WTC11 (cell line): ENCODE measurements at regions of chr20 and their contacts with region 1.

Region 1: DNA sequence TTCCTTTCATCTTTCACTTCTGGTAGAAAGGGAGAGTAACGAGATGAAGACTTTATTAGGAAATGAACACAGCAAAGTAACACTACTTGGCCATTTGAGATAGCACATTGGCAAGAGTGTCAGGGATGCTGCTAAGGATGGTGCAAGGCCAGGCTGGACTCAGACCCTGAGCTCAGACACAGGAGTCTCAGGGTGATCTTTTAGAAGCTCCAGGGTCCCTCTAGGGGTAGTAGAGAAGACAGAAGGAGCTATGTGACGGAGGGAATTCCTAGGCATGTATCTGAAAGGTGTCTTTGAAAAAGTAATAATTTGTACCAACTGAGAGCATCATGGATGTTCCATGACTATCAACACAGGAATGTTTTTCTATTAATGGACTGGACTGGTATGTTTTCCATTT is 436.5 kb downstream of the DHX35 start:
- DNase-seq: peak; percentile 13
- ATAC-seq: peak; percentile 84
- H3K4me3 Mint-ChIP-seq: no peak overlapping the region
- H3K27ac Mint-ChIP-seq: no peak overlapping the region
- H3K4me1 Mint-ChIP-seq: no peaks in the 10 kb centered on the region
- H3K27me3 Mint-ChIP-seq: peaks cover 2% of the 10 kb centered on the region
- CTCF ChIP-seq: no peak

Region 2: DNA sequence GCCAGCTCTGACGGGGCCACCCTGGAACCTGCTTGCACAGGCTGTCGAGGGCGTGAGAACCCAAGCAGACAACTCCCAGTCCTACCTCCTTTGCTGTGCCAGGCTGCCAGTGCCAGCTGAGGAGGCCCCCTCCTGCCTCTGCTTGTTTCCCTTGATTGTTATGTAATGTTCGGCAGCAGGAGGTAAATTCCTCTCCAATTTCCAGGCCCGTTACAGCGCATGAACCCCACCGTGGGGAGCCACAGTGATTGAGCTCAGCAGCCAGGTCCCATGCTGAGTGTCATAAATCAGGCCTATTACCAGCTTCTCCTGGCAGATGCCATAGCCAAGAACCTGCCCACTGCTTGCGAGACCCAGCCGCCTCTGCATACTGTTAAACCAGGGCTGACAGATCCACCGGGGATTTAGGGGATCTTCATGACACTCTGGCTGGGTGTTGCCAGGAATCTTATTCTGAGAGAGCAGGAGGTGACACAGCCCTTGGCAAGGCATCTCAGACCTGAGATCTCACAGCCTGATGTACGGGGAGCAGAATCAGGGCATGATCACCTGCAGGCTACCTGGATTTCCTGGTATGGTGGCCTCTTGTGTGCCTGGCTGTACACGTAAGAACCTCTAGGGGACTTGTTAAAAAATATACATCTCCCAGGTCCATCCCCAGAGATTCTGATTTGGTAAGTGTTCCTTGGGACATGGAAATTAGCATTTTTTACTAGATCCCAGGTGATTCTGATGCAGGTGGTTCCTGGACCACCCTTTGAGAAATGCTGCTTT is 115.8 kb before region 1 on chr20:
- CTCF ChIA-PET with region 1: interaction called, 34 read pairs
- POLR2A ChIA-PET with region 1: no interaction called
- DNase-seq: peak; percentile 73
- ATAC-seq: peak; percentile 85
- H3K4me3 Mint-ChIP-seq: peak overlapping the region; percentile 32
- H3K27ac Mint-ChIP-seq: no peak overlapping the region
- H3K4me1 Mint-ChIP-seq: peaks cover 50% of the 10 kb centered on the region
- H3K27me3 Mint-ChIP-seq: peaks cover 53% of the 10 kb centered on the region
- CTCF ChIP-seq: no peak

Region 3: GRCh38 chr20:39289316-39289715 is 109.3 kb before region 1 on chr20:
- CTCF ChIA-PET with region 1: interaction called, 34 read pairs
- POLR2A ChIA-PET with region 1: no interaction called
- DNase-seq: peak; percentile 47
- ATAC-seq: peak; percentile 81
- H3K4me3 Mint-ChIP-seq: no peak overlapping the region
- H3K27ac Mint-ChIP-seq: 0 out of 2 replicates have a peak overlapping the region, but pooled peaks have one; percentile 3
- H3K4me1 Mint-ChIP-seq: peaks cover 62% of the 10 kb centered on the region
- H3K27me3 Mint-ChIP-seq: peaks cover 19% of the 10 kb centered on the region
- CTCF ChIP-seq: peak; percentile 38; the same call in 1 of the 2 replicates

Region 4: DNA sequence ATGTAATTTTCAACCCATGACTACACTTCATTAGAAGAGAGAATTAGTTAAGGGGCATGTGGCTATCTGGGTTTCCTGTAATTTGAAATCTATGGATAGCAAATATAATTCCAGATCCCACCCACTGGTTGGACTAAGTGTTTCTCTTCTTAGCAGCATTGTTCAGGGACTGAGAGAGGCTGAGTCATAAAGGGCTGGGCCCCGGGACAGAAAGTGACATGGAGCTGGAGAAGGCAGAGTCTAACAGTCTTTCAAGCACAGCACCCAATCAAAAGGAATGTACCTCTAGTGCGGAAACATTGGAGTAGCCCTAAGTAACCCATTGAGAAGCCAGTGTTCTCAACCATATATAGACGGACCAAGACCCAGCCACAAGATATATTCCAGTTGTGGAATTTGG is 72.6 kb before region 1 on chr20:
- CTCF ChIA-PET with region 1: no interaction called
- POLR2A ChIA-PET with region 1: no interaction called
- DNase-seq: no peak
- ATAC-seq: no peak
- H3K4me3 Mint-ChIP-seq: no peak overlapping the region
- H3K27ac Mint-ChIP-seq: no peak overlapping the region
- H3K4me1 Mint-ChIP-seq: peaks cover 5% of the 10 kb centered on the region
- H3K27me3 Mint-ChIP-seq: no peaks in the 10 kb centered on the region
- CTCF ChIP-seq: no peak